Ovary (tissue), 10 donors: ENCODE measurements at regions of chr5 and their contacts with region 1.

Region 1: DNA sequence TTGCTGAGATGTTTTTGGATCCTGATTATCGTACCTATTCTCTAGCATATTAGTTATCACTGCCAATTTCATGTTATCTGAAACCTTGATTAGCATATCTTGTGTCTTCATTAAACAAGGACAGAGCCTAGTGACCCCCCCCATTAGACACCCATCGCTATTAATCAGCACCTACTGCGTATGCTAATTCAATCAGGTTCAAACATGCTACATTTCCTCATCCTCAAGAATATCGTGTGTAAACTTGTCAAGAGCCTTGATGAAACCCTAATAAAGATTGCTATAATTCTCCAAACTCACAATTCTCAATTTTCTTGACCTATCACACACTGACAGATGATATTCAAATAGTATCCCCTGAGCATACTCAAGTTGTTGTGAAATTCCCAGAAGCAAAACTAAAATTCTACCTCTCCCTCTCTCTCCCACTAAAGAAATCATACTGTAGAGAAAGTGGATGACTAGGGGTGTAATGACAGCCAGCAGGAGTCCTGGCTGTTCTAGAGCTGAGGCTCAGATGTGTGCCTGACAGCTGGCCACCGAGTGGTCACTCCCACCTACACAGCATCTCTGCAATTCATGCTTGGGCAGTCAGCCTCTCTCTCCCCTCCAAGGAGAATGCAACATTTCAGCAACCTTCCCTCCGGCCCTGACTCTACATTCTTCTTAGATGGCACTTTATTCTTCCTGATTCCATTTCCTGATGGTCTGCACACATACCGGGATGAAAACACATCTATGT is 9.2 kb upstream of the ZNF354A start:
- DNase-seq: no peak
- H3K4me3 ChIP-seq: no peak overlapping the region
- H3K27ac ChIP-seq: no peak overlapping the region
- H3K4me1 ChIP-seq: no peaks in the 10 kb centered on the region
- H3K27me3 ChIP-seq: no peaks in the 10 kb centered on the region
- CTCF ChIP-seq: no peak
- EP300 ChIP-seq: no peak
- POLR2A ChIP-seq: no peak

Region 2: DNA sequence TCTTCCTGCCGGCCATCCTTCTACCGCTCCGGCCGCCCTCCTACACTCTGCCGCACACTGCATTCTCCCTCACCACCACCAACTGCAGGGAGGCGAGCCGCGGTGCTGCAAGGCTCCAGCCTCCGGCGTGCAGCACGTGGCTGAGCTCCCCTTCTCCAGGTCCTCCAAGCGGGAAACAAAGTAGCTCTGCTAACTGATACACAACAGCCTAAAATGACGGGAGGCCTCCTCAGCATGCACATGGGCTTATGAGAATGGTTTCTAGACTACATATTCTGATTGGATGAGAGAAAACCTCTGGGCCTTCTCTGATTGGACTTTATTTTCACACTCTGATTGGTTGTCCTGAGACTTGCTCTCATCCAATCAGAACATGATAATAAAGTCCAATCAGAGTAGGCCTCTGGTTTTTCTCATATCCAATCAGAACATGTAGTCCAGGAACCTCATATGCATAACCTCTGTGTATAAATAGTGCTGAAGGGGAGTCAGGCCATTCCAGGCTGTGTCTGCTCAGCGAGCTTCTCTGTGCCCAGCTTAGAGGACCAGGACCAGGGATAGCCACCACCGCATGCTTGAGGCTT is 93.1 kb after region 1 on chr5:
- intact Hi-C with region 1: no loop called
- DNase-seq: no peak
- H3K4me3 ChIP-seq: no peak overlapping the region
- H3K27ac ChIP-seq: no peak overlapping the region
- H3K4me1 ChIP-seq: no peaks in the 10 kb centered on the region
- H3K27me3 ChIP-seq: no peaks in the 10 kb centered on the region
- CTCF ChIP-seq: no peak
- EP300 ChIP-seq: no peak
- POLR2A ChIP-seq: no peak

Region 3: GRCh38 chr5:178849316-178849715 is 109.7 kb after region 1 on chr5:
- intact Hi-C with region 1: loop called in 2 of 4 experiments (anchors 10 kb)
- DNase-seq: no peak
- H3K4me3 ChIP-seq: no peak overlapping the region
- H3K27ac ChIP-seq: no peak overlapping the region
- H3K4me1 ChIP-seq: no peaks in the 10 kb centered on the region
- H3K27me3 ChIP-seq: no peaks in the 10 kb centered on the region
- CTCF ChIP-seq: no peak
- EP300 ChIP-seq: no peak
- POLR2A ChIP-seq: no peak